CD4-positive, alpha-beta T cell (primary cell): ENCODE measurements at regions of chr11 and their contacts with region 1.

Region 1: GRCh38 chr11:61111786-61112517 is 9.7 kb downstream of the CD5 start:
- DNase-seq: peak in 13 of 14 experiments; percentile 28 to 87 (median 52)
- ATAC-seq: peak; percentile 78
- H3K4me3 ChIP-seq: peak overlapping the region; percentile 24
- H3K4me3 Mint-ChIP-seq: peak overlapping the region; percentile 83
- H3K27ac ChIP-seq: peak overlapping the region; percentile 67 to 71
- H3K27ac Mint-ChIP-seq: no peak overlapping the region
- H3K4me1 ChIP-seq: peaks cover 100% of the 10 kb centered on the region
- H3K4me1 Mint-ChIP-seq: peaks cover 100% of the 10 kb centered on the region
- H3K27me3 ChIP-seq: no peaks in the 10 kb centered on the region
- H3K27me3 Mint-ChIP-seq: no peaks in the 10 kb centered on the region
- CTCF ChIP-seq: no peak

Region 2: DNA sequence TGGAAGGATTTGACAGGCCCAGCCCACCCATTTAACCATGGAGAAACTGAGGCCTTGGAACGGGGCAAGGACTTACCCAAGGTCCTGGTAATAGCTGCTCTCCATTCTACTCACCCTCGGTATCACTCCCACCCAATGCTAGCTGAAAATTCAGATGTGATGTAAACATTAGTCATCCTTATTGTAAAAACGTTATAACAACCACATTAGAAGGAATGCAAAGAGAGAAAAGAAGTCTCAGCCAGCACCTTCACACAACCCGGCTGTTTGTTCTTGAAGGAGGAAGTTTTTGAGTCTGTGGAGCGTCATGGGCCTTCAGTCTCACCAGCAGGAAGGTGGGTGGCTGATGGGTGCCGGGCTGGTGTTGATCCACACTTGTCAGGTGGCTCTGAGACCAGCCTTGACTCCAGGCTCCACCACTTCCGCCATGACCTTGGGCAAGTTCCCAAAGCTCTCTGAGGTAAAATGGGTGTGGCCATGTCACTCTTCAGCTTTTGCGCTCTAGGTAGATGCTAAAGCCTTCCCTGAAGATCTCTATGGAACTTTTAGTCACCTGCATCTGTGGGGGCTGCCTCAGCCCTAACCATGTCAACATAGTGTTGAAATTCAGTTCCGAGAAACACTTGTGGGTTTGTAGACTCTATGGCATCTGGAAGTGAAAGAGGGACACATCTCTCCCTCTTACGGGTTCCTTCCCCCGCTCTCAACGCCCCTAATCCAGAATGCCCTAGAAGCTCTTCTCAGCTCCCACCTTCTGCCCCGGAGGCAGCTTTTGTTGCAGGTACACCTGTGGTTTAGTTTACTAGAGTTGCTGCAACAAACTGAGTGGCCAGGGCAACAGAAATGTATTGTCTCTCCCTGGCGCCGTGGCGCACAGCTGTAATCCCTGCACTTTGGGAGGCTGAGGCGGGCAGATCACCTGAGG is 125.7 kb before region 1 on chr11:
- CTCF ChIA-PET with region 1: interaction called, 4 read pairs
- POLR2A ChIA-PET with region 1: interaction called, 49 read pairs
- intact Hi-C with region 1: loop called in 1 of 2 experiments (anchors 5 kb)
- DNase-seq: peak; percentile 81 to 99 (median 90)
- ATAC-seq: peak; percentile 81
- H3K4me3 ChIP-seq: peak overlapping the region; percentile 41
- H3K4me3 Mint-ChIP-seq: peak overlapping the region; percentile 72
- H3K27ac ChIP-seq: peak overlapping the region; percentile 86 to 95
- H3K27ac Mint-ChIP-seq: peak overlapping the region; percentile 94
- H3K4me1 ChIP-seq: peaks cover 91% of the 10 kb centered on the region
- H3K4me1 Mint-ChIP-seq: peaks cover 98% of the 10 kb centered on the region
- H3K27me3 ChIP-seq: no peaks in the 10 kb centered on the region
- H3K27me3 Mint-ChIP-seq: no peaks in the 10 kb centered on the region
- CTCF ChIP-seq: no peak

Region 3: GRCh38 chr11:61021661-61022212 is 90.2 kb before region 1 on chr11:
- CTCF ChIA-PET with region 1: no interaction called
- POLR2A ChIA-PET with region 1: interaction called, 42 read pairs
- intact Hi-C with region 1: loop called in 1 of 2 experiments (anchors 5 kb)
- DNase-seq: peak; percentile 82 to 97 (median 92)
- ATAC-seq: peak; percentile 71
- H3K4me3 ChIP-seq: peak overlapping the region; percentile 21
- H3K4me3 Mint-ChIP-seq: peak overlapping the region; percentile 87
- H3K27ac ChIP-seq: peak overlapping the region; percentile 81 to 88
- H3K27ac Mint-ChIP-seq: peak overlapping the region; percentile 99
- H3K4me1 ChIP-seq: peaks cover 85% of the 10 kb centered on the region
- H3K4me1 Mint-ChIP-seq: peaks cover 85% of the 10 kb centered on the region
- H3K27me3 ChIP-seq: no peaks in the 10 kb centered on the region
- H3K27me3 Mint-ChIP-seq: no peaks in the 10 kb centered on the region
- CTCF ChIP-seq: no peak

Region 4: DNA sequence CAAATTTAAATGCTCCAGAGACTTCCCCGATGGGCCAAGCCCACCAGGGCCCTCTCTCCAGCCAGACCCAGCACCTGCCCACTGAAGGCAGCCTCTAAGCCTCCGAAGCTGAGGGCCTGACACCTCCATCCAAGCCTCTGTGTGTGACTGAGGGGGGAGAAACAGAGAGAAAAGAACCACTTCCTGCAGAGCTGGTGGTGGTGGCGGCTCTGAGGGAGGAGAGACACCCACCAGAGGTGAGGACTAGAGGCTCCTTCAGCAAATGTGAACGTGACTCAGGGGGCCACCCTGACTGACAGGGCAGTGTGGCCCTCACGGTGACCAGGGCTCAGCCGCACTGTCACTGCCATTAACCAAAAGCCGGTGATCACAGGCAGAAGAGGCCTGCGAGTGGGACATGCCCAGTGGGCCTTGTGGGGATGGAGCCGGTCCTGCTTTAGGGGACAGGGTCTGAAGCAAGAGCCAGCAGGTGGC is 40.7 kb before region 1 on chr11:
- CTCF ChIA-PET with region 1: no interaction called
- POLR2A ChIA-PET with region 1: interaction called, 40 read pairs
- intact Hi-C with region 1: no loop called
- DNase-seq: peak; percentile 37 to 88 (median 63)
- ATAC-seq: peak; percentile 95
- H3K4me3 ChIP-seq: no peak overlapping the region
- H3K4me3 Mint-ChIP-seq: peak overlapping the region; percentile 82
- H3K27ac ChIP-seq: peak overlapping the region; percentile 26 to 58
- H3K27ac Mint-ChIP-seq: peak overlapping the region; percentile 92
- H3K4me1 ChIP-seq: peaks cover 80% of the 10 kb centered on the region
- H3K4me1 Mint-ChIP-seq: peaks cover 95% of the 10 kb centered on the region
- H3K27me3 ChIP-seq: no peaks in the 10 kb centered on the region
- H3K27me3 Mint-ChIP-seq: no peaks in the 10 kb centered on the region
- CTCF ChIP-seq: no peak